ENCODE measurements at regions of chr2 and their contacts with region 1.

Region 1: DNA sequence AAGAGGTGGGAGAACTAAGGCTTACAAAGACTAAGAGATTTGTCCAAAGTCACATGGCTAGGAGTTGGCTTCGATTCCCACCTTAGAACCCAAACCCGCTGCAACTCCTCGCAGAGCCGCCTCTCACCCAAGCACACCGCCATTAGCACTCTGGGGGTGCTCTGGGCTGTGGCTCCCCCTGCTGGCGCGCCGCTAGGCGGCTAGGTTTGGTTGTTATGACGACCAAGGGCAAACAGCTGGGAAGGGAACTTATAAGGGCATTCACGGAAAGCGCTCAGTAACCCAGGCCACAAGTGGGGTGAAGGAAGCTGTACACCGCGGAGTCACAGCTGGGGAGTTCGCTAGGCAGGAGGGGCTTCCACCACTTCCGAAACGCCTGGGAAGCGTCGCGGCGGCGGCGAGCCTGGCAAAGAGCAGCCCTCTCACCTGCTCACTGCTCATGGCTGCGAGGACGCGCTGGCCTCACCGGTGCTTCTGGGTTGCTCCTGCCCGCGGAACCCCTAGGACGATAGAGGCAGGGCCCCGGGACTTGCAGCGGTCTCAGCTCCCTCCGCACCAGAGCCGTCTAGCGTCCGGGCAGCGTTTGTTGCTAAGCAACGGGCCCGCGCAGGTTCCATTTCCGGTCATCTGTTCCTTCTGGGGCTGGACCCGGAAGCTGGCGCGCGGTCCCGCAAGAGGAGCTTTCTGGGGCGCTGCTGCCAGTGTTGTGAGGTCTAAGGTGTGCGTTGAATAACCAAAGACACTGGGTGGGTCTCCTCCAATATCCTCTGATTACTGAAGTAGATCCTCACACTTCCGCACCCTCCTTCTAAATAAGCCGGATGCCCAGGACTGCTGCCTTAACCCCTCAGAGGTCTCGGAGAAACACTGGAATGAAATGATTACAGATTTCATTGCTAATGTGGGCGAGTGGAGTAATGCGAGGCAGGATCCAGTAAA is at the start of gene DNAH7:
- DNase-seq: no peak
- H3K4me3 ChIP-seq: peak within 1 kb of the TSS; percentile 99
- CTCF ChIP-seq: peak; percentile 98

Region 2: GRCh38 chr2:195548198-195548940 is 520.2 kb before region 1 on chr2:
- CTCF ChIA-PET with region 1: no interaction called
- POLR2A ChIA-PET with region 1: no interaction called
- DNase-seq: no peak
- H3K4me3 ChIP-seq: no peak overlapping the region
- CTCF ChIP-seq: no peak

Region 3: DNA sequence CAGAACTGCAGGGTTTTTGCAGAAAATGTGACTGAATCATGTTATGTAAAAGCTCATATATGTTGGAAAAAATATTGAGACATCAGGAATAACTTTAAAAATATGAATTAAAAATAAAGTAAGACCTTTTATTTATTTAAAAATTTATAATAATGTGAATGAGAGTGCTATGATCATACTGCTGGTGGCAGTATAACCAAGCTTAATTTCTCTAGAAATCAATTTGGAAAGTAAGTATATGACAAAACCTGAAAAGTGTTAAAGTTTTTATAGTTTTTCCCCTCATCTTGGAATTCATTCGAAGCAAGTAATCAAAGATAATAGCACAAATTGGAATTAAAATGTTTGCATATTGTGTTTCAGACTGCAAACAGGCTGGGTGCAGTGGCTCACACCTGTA is 404.0 kb before region 1 on chr2:
- CTCF ChIA-PET with region 1: interaction called, 104 read pairs
- POLR2A ChIA-PET with region 1: interaction called, 4 read pairs
- DNase-seq: no peak
- H3K4me3 ChIP-seq: no peak overlapping the region
- CTCF ChIP-seq: no peak

Region 4: GRCh38 chr2:195672668-195673067 is 395.9 kb before region 1 on chr2:
- CTCF ChIA-PET with region 1: interaction called, 104 read pairs
- POLR2A ChIA-PET with region 1: no interaction called
- DNase-seq: no peak
- H3K4me3 ChIP-seq: no peak overlapping the region
- CTCF ChIP-seq: no peak

Region 5: GRCh38 chr2:196046123-196046917 is 22.2 kb before region 1 on chr2:
- CTCF ChIA-PET with region 1: interaction called, 58 read pairs
- POLR2A ChIA-PET with region 1: no interaction called
- DNase-seq: no peak
- H3K4me3 ChIP-seq: no peak overlapping the region
- CTCF ChIP-seq: no peak

Region 6: DNA sequence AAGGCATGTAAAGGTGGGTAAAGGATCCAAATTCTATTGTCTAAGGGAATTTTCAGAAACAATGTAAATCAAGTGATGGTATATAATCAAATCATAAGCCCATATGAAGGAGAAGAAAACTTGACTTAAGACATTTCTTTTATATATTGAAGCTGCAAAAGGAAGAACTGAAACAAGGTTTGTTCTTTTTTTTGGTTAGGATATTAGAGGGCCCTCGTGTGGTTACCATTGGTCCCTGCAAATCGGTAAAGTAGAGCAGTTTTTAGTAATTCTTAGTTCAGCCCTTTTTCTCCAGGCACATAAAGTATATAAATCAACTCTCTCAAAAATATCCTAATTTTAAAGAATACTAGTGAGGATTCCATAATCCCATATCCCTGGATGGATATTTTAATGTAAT is 208.5 kb after region 1 on chr2:
- CTCF ChIA-PET with region 1: interaction called, 15 read pairs
- POLR2A ChIA-PET with region 1: no interaction called
- DNase-seq: no peak
- H3K4me3 ChIP-seq: no peak overlapping the region
- CTCF ChIP-seq: peak; percentile 42

Region 7: GRCh38 chr2:196322973-196323810 is 254.7 kb after region 1 on chr2:
- CTCF ChIA-PET with region 1: interaction called, 14 read pairs
- POLR2A ChIA-PET with region 1: no interaction called
- DNase-seq: peak; percentile 42
- H3K4me3 ChIP-seq: no peak overlapping the region
- CTCF ChIP-seq: no peak